Activated T-helper 2 cell treated with anti-CD3 and anti-CD28 coated beads, Interferon-gamma antibody, Interleukin-2, Interleukin-4, amounts not matched to agents 10 μg/mL and 5 μg/mL and 100 μg/mL, durations not matched to agents 14 hours and 24 hours and 36 hours (primary cell): ENCODE measurements at regions of chr1 and their contacts with region 1.

Region 1: DNA sequence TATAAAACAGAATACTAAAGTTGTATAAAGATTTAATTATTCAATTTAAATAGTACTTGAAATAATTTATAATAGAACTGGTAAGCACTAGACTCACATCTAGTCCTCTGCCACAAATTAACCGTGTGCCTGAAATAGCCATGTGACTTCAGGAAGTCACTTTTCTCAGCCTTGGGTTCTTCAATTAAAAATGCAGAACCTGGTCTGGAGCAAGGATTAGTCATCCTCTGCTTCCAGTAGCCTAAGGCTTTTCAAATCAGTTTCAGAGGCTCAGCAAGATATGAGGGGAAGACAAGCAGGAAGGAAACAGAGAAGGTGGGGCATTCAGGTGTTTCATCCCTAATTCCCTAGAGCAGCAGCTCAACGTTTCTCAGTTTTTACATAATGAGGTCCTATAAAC is 23.0 kb downstream of the DPH5 start:
- DNase-seq: no peak
- H3K4me3 Mint-ChIP-seq: no peak overlapping the region
- H3K27ac Mint-ChIP-seq: no peak overlapping the region
- H3K4me1 Mint-ChIP-seq: peaks cover 32% of the 10 kb centered on the region
- H3K27me3 Mint-ChIP-seq: no peaks in the 10 kb centered on the region

Region 2: DNA sequence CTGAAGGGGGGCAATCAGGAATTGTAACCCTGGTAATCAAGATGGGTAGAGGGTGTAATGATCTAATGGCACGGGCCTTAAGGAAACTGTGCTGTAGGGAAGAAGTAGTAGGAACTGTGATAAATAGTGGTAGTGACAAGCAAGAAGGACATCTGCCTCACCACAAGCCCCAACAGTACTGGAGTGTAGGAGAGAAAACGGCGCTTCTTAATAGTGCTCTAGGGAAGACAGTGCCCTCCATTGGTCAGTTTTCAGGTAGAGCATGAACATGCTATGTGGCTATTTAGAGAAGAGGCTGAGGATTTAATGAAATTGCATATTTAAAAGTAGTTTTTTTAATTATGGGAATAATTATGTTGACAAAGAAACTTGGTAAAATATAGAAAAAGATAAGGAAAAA is 74.4 kb before region 1 on chr1:
- intact Hi-C with region 1: loop called (anchors 5 kb)
- DNase-seq: no peak
- H3K4me3 Mint-ChIP-seq: no peak overlapping the region
- H3K27ac Mint-ChIP-seq: no peak overlapping the region
- H3K4me1 Mint-ChIP-seq: peaks cover 49% of the 10 kb centered on the region
- H3K27me3 Mint-ChIP-seq: no peaks in the 10 kb centered on the region

Region 3: GRCh38 chr1:100941098-100941527 is 61.4 kb before region 1 on chr1:
- intact Hi-C with region 1: loop called (anchors 5 kb)
- DNase-seq: no peak
- H3K4me3 Mint-ChIP-seq: no peak overlapping the region
- H3K27ac Mint-ChIP-seq: peak overlapping the region; percentile 86
- H3K4me1 Mint-ChIP-seq: peaks cover 35% of the 10 kb centered on the region
- H3K27me3 Mint-ChIP-seq: peaks cover 1% of the 10 kb centered on the region

Region 4: DNA sequence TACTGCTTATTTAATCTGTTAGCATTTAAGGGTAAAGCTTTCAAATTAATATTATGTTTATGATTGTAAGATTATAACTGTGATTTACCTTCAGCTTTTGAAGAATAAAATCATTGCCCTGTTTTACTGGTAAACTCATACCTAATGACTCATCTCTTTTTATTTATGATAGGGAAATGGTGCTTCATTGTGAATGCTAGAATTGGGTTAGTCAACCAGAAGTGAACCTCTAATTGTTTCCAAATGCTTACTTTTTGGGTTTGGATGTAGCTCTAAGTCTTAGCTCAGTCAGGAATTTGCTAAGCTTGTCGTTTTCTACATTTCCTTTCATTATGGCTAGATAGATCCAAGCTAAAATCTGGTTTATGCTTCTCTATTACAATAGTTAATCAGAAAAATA is 47.2 kb before region 1 on chr1:
- intact Hi-C with region 1: loop called (anchors 5 kb)
- DNase-seq: no peak
- H3K4me3 Mint-ChIP-seq: no peak overlapping the region
- H3K27ac Mint-ChIP-seq: no peak overlapping the region
- H3K4me1 Mint-ChIP-seq: peaks cover 36% of the 10 kb centered on the region
- H3K27me3 Mint-ChIP-seq: no peaks in the 10 kb centered on the region

Region 5: GRCh38 chr1:101081496-101082488 is 79.2 kb after region 1 on chr1:
- intact Hi-C with region 1: loop called (anchors 1 kb)
- DNase-seq: peak; percentile 64
- H3K4me3 Mint-ChIP-seq: peak overlapping the region; percentile 0
- H3K27ac Mint-ChIP-seq: peak overlapping the region; percentile 67
- H3K4me1 Mint-ChIP-seq: peaks cover 51% of the 10 kb centered on the region
- H3K27me3 Mint-ChIP-seq: no peaks in the 10 kb centered on the region

Region 6: GRCh38 chr1:101122452-101123166 is 120.1 kb after region 1 on chr1:
- intact Hi-C with region 1: loop called (anchors 2 kb)
- DNase-seq: no peak
- H3K4me3 Mint-ChIP-seq: no peak overlapping the region
- H3K27ac Mint-ChIP-seq: peak overlapping the region; percentile 73
- H3K4me1 Mint-ChIP-seq: peaks cover 60% of the 10 kb centered on the region
- H3K27me3 Mint-ChIP-seq: no peaks in the 10 kb centered on the region

Region 7: DNA sequence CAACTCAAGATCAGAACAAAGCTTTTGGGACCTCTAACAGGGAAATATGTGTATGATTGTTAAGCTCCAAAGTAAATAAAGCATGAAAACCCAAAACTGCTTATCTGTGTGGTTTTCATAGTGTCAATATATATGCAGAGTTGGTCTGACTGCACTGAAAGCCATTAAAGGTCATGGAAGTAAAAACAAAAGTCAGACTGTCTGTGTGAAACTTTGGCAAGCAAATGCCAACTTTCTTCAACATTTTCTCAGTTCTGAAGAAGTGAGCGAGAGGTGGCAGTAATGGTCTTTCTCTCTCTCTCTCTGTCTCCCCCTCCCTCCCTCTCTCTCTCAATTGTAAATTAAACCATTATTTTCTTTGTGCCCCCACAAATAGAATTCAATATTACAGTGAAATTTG is 134.2 kb after region 1 on chr1:
- intact Hi-C with region 1: loop called (anchors 5 kb)
- DNase-seq: no peak
- H3K4me3 Mint-ChIP-seq: peak overlapping the region; percentile 47
- H3K27ac Mint-ChIP-seq: peak overlapping the region; percentile 89
- H3K4me1 Mint-ChIP-seq: peaks cover 67% of the 10 kb centered on the region
- H3K27me3 Mint-ChIP-seq: no peaks in the 10 kb centered on the region